Caco-2 (cell line): ENCODE measurements at regions of chr1 and their contacts with region 1.

Region 1: DNA sequence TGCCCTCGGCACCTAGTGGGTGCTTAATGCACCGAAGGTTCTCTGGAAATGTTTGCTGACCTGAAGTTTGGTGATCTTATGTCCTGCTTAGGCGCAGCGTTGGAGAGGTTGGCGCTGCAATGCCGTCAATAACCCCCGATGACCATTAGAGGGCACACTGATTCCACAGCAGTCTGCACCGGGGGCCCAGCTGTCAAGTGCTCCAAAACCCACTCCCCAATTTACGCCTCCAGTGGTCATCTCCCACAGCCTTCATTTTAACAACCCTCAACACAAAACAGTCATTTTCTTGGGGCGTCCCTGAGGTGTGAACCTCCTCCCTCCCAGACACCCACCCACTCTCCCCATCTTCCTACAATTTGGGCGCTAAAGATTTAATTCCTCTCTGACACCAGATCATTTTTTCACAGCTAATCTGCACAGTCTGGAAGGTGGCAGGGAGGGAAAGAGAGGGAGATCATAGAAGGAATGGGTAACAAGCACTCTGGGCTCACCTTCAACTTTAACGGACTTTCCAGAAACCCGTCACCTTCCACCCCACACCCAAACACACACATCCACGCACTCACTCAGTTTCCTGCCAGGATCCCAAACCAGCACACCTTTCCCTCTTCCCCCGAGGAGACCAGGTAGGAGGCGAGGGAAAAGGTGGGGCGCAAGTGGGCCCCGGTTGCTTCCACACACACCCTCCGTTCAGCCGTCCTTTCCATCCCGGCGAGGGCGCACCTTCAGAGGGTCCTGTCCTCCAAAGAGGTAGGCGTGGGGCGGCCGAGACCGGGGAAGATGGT is 576 bp upstream of the NPR1 start:
- DNase-seq: peak; percentile 66 to 72
- H3K4me3 ChIP-seq: peak overlapping the region; percentile 73
- H3K4me3 Mint-ChIP-seq: peak overlapping the region; percentile 97
- H3K27ac Mint-ChIP-seq: peak overlapping the region; percentile 18
- H3K4me1 ChIP-seq: peaks cover 16% of the 10 kb centered on the region
- H3K4me1 Mint-ChIP-seq: peaks cover 28% of the 10 kb centered on the region
- H3K27me3 ChIP-seq: no peaks in the 10 kb centered on the region
- H3K27me3 Mint-ChIP-seq: peaks cover 9% of the 10 kb centered on the region
- CTCF ChIP-seq: peak; percentile 91 to 93

Region 2: DNA sequence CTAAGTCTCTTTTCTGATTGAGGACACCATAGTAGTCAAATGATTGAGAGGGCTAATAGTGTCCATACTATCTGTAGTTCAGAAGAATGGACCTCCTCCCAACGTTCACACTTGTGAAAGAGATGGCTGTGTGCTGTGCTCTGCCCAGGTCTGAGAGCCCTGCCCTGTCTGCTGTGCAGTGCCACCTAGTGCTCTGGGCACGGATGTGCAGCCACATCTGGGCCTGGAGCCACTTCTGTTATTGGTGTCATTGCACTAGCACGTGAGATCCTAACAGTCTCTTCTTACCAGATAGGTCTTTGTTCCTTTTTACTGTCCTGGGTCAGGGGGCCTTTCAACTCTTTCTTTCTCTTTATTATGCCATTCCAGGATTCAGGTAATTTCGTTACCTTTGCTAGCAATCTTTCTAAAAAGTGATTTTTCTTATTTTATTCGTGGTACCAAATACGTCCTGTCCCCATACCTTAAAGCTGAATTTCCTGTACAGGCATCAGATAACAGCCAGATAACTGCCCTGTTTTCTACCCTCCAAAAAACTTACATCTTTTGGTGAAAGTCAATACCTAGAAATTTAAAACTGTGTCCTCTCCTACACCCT is 71.6 kb after region 1 on chr1:
- CTCF ChIA-PET with region 1: interaction called, 6 read pairs
- POLR2A ChIA-PET with region 1: no interaction called
- intact Hi-C with region 1: loop called (anchors 1 kb)
- DNase-seq: peak; percentile 79 to 85
- H3K4me3 ChIP-seq: no peak overlapping the region
- H3K4me3 Mint-ChIP-seq: no peak overlapping the region
- H3K27ac Mint-ChIP-seq: no peak overlapping the region
- H3K4me1 ChIP-seq: no peaks in the 10 kb centered on the region
- H3K4me1 Mint-ChIP-seq: peaks cover under 1% of the 10 kb centered on the region
- H3K27me3 ChIP-seq: no peaks in the 10 kb centered on the region
- H3K27me3 Mint-ChIP-seq: no peaks in the 10 kb centered on the region
- CTCF ChIP-seq: peak; percentile 88 to 97

Region 3: GRCh38 chr1:153768316-153769181 is 90.6 kb after region 1 on chr1:
- CTCF ChIA-PET with region 1: interaction called, 4 read pairs
- POLR2A ChIA-PET with region 1: no interaction called
- intact Hi-C with region 1: loop called (anchors 2 kb)
- DNase-seq: peak; percentile 68 to 77
- H3K4me3 ChIP-seq: no peak overlapping the region
- H3K4me3 Mint-ChIP-seq: peak overlapping the region; percentile 3
- H3K27ac Mint-ChIP-seq: peak overlapping the region; percentile 52
- H3K4me1 ChIP-seq: peaks cover 19% of the 10 kb centered on the region
- H3K4me1 Mint-ChIP-seq: peaks cover 32% of the 10 kb centered on the region
- H3K27me3 ChIP-seq: no peaks in the 10 kb centered on the region
- H3K27me3 Mint-ChIP-seq: no peaks in the 10 kb centered on the region
- CTCF ChIP-seq: no peak

Region 4: GRCh38 chr1:153796791-153797659 is 119.1 kb after region 1 on chr1:
- CTCF ChIA-PET with region 1: no interaction called
- POLR2A ChIA-PET with region 1: no interaction called
- intact Hi-C with region 1: loop called (anchors 1 kb)
- DNase-seq: peak; percentile 80 to 82
- H3K4me3 ChIP-seq: no peak overlapping the region
- H3K4me3 Mint-ChIP-seq: no peak overlapping the region
- H3K27ac Mint-ChIP-seq: no peak overlapping the region
- H3K4me1 ChIP-seq: no peaks in the 10 kb centered on the region
- H3K4me1 Mint-ChIP-seq: no peaks in the 10 kb centered on the region
- H3K27me3 ChIP-seq: no peaks in the 10 kb centered on the region
- H3K27me3 Mint-ChIP-seq: no peaks in the 10 kb centered on the region
- CTCF ChIP-seq: peak; percentile 76 to 93

Region 5: GRCh38 chr1:153922972-153923925 is 245.3 kb after region 1 on chr1 and contains the start of gene GATAD2B:
- CTCF ChIA-PET with region 1: no interaction called
- POLR2A ChIA-PET with region 1: no interaction called
- intact Hi-C with region 1: loop called (anchors 5 kb)
- DNase-seq: peak; percentile 99 to 100
- H3K4me3 ChIP-seq: peak within 1 kb of the TSS; percentile 65
- H3K4me3 Mint-ChIP-seq: peak within 1 kb of the TSS; percentile 71
- H3K27ac Mint-ChIP-seq: peak within 1 kb of the TSS; percentile 86
- H3K4me1 ChIP-seq: peaks cover 16% of the 10 kb centered on the region
- H3K4me1 Mint-ChIP-seq: peaks cover 15% of the 10 kb centered on the region
- H3K27me3 ChIP-seq: no peaks in the 10 kb centered on the region
- H3K27me3 Mint-ChIP-seq: no peaks in the 10 kb centered on the region
- CTCF ChIP-seq: no peak
- total RNA-seq, gene GATAD2B: 38.0 and 42.6 TPM in 2 replicates